Astrocyte of the cerebellum (primary cell): ENCODE measurements at regions of chr9 and their contacts with region 1.

Region 1: DNA sequence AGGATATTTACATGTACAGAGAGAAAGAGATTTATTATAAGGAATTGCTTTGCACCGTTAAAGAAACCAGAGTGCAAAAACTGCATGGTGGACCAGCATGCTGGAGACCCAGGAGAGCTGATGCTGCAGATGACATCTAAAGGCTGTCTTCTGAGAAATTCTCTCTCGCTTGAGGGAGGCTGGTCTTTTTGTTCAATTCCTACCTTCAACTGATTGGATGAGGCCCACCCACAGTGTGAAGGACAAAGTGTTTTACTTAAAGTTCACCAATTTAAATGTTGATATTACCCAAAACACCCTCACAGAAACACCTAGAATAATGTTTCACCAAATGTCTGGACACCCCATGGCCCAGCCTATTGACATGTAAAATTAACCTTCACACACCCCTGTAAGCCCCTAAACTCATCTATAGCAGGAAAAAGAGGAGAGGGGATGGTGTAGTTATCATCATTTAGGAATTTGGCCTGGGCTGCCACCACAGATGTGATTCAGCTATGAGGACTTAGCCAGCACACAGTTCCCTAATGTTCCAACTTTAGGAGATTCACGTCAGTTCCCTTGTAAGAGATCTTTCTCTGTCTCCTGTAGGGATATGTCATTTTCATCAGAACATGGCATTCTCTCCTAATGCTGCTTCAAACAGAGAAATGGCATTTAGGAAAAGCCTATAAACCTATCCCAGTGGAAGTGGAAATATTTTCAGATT is 358.2 kb upstream of the TLE4 start:
- DNase-seq: no peak
- H3K4me3 ChIP-seq: no peak overlapping the region
- CTCF ChIP-seq: no peak

Region 2: GRCh38 chr9:79129865-79130480 is 83.6 kb before region 1 on chr9:
- in situ Hi-C with region 1: loop called (anchors 5 kb)
- DNase-seq: peak; percentile 49
- H3K4me3 ChIP-seq: no peak overlapping the region
- CTCF ChIP-seq: peak; percentile 93

Region 3: GRCh38 chr9:79300068-79300467 is 86.5 kb after region 1 on chr9:
- in situ Hi-C with region 1: loop called (anchors 5 kb)
- DNase-seq: no peak
- H3K4me3 ChIP-seq: no peak overlapping the region
- CTCF ChIP-seq: no peak